Natural killer cell (primary cell): ENCODE measurements at regions of chrX and their contacts with region 1.

Region 1: DNA sequence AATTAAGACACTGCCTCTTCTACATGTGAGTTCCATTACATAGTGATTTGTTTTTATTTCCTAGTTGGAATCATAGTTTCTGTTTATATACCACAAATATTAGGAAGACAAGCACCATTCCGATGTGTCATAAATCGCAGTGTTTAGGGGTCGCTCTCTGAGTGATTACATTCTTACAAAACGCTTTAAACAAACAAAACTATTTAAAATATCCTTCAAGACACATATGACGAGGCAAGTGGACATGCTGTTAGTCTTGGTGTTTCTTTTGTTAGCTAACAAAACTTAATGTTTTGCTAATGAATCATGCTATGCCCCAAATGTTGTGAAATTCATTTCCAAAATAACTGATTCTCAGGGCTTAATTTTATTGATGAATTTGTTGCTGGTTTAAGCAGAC is 1219.3 kb upstream of the PRKX start:
- DNase-seq: no peak
- ATAC-seq: no peak
- H3K4me3 ChIP-seq: no peak overlapping the region
- H3K4me3 Mint-ChIP-seq: no peak overlapping the region
- H3K27ac ChIP-seq: no peak overlapping the region
- H3K27ac Mint-ChIP-seq: no peak overlapping the region
- H3K4me1 ChIP-seq: no peaks in the 10 kb centered on the region
- H3K4me1 Mint-ChIP-seq: peaks cover 0 to 4% of the 10 kb centered on the region in 2 donors
- H3K27me3 ChIP-seq: no peaks in the 10 kb centered on the region
- H3K27me3 Mint-ChIP-seq: no peaks in the 10 kb centered on the region
- CTCF ChIP-seq: no peak

Region 2: DNA sequence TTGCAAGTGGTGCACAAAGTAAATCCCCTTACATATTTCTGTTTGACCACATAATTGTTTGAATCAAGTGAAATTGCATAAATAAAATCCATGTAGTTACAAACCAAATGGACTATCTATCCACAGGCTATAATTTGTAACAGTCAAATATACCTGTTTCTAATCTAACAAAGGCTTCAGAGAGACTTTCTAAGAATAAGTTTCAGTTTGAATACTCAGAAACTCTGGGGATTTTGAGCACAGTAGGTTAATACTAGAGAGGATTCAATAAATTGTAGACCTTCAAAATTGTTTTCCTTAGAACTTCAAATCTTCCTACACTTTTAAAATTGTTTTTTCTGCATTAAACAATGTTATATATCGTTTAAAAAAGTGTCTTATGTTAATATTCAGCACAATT is 45.8 kb after region 1 on chrX:
- intact Hi-C with region 1: loop called (anchors 2 kb)
- DNase-seq: no peak
- ATAC-seq: no peak
- H3K4me3 ChIP-seq: no peak overlapping the region
- H3K4me3 Mint-ChIP-seq: no peak overlapping the region
- H3K27ac ChIP-seq: no peak overlapping the region
- H3K27ac Mint-ChIP-seq: no peak overlapping the region
- H3K4me1 ChIP-seq: no peaks in the 10 kb centered on the region
- H3K4me1 Mint-ChIP-seq: no peaks in the 10 kb centered on the region
- H3K27me3 ChIP-seq: no peaks in the 10 kb centered on the region
- H3K27me3 Mint-ChIP-seq: no peaks in the 10 kb centered on the region
- CTCF ChIP-seq: no peak